Heart left ventricle (tissue), 16 donors: ENCODE measurements at regions of chr19 and their contacts with region 1.

Region 1: GRCh38 chr19:7799640-7800355 is 30.2 kb upstream of the EVI5L start:
- DNase-seq: peak; percentile 53 to 75 (median 64)
- ATAC-seq: peak in 3 of 4 donors; percentile 68 to 89 (median 79)
- H3K4me3 ChIP-seq: peak overlapping the region in 6 of 12 donors; percentile 4 to 33 (median 12)
- H3K27ac ChIP-seq: peak overlapping the region in 1 of 12 donors; percentile 11
- H3K4me1 ChIP-seq: peaks cover 0 to 8% (median 0%) of the 10 kb centered on the region in 12 donors
- H3K27me3 ChIP-seq: peaks cover 0 to 41% (median 16%) of the 10 kb centered on the region in 9 donors
- CTCF ChIP-seq: peak; percentile 29 to 68 (median 58)
- POLR2A ChIP-seq: no peak

Region 2: DNA sequence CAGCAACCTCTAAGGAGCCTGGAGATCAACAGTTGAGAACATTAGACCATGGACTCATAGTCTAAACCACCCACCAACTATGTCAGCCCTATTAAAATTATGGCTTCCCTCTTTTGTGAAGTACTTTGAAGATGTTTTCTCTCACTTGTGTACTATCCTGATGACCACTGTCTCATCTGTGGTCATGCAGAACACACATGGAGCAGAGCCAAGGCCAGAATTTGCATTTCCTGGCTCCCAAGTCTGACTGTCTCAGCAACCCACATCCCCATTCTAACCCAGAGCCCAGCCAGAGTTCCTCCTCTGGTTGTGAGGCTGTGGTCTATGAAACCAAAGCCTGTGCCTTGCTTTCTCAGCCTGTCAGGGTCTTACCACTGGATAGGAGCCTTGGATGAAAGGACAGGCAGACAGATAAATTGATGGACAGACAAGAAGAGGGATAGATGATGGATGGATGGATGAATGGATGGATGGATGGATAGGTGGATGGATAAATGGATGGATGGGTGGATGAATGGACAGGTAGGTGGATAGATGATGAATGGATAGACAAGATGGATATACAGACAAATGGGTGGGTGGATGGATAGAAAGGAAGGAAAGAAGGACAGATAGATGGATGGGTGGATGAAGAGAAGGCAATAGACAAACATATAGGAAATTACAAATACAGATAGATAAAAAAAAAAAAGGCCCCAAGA is 694.9 kb before region 1 on chr19:
- intact Hi-C with region 1: loop called in 5 of 10 experiments (anchors 5 to 10 kb)
- DNase-seq: no peak
- ATAC-seq: peak in 2 of 4 donors; percentile 16 to 24
- H3K4me3 ChIP-seq: no peak overlapping the region
- H3K27ac ChIP-seq: no peak overlapping the region
- H3K4me1 ChIP-seq: peaks cover 0 to 5% (median 0%) of the 10 kb centered on the region in 12 donors
- H3K27me3 ChIP-seq: peaks cover 0 to 4% (median 0%) of the 10 kb centered on the region in 9 donors
- CTCF ChIP-seq: no peak
- POLR2A ChIP-seq: no peak

Region 3: GRCh38 chr19:7349961-7350711 is 449.7 kb before region 1 on chr19:
- intact Hi-C with region 1: loop called in 9 of 10 experiments (anchors 2 to 10 kb)
- DNase-seq: no peak
- ATAC-seq: peak in 1 of 4 donors; percentile 14
- H3K4me3 ChIP-seq: peak overlapping the region in 2 of 12 donors; percentile 26 to 56
- H3K27ac ChIP-seq: peak overlapping the region in 1 of 12 donors; percentile 86
- H3K4me1 ChIP-seq: peaks cover 0 to 28% (median 0%) of the 10 kb centered on the region in 12 donors
- H3K27me3 ChIP-seq: no peaks in the 10 kb centered on the region
- CTCF ChIP-seq: no peak
- POLR2A ChIP-seq: no peak

Region 4: DNA sequence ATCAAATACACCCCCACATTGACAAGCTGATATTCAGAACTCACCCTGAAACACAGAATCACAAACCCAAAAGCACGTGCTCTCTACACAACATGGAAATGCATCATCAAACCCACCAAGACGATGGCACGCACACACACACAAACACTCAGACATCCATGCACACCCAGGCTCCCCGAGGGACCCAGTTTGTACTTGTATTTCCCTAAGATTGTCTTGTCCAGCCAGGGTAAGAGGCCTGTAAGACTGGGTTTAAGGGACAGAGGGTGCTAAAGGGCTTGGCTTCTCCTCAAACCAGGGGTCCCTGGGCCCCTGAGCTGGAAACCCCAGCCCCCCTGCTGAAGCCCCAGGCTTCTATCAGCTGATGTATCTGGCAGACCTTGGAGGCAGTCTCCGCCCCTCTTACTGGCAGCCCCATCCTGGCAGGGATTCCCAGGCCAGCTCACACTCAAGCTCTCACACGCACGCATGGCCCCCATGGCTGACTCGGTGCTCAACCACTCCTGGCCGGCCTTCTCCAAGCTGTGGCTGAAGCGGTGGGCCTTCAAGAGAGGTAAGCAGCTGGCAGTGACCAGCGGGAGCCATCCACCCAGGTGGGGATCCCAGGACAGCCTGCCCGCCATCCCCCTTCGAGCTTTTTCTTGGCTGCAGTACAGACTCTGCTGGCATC is 444.5 kb before region 1 on chr19:
- intact Hi-C with region 1: loop called in 9 of 10 experiments (anchors 2 to 10 kb)
- DNase-seq: no peak
- ATAC-seq: no peak
- H3K4me3 ChIP-seq: no peak overlapping the region
- H3K27ac ChIP-seq: peak overlapping the region in 1 of 12 donors; percentile 80
- H3K4me1 ChIP-seq: peaks cover 0 to 5% (median 0%) of the 10 kb centered on the region in 12 donors
- H3K27me3 ChIP-seq: peaks cover 0 to 6% (median 0%) of the 10 kb centered on the region in 9 donors
- CTCF ChIP-seq: no peak
- POLR2A ChIP-seq: no peak

Region 5: GRCh38 chr19:7562646-7563393 is 237.0 kb before region 1 on chr19:
- intact Hi-C with region 1: loop called in 9 of 10 experiments (anchors 1 to 10 kb)
- DNase-seq: no peak
- ATAC-seq: no peak
- H3K4me3 ChIP-seq: no peak overlapping the region
- H3K27ac ChIP-seq: no peak overlapping the region
- H3K4me1 ChIP-seq: no peaks in the 10 kb centered on the region
- H3K27me3 ChIP-seq: no peaks in the 10 kb centered on the region
- CTCF ChIP-seq: no peak
- POLR2A ChIP-seq: no peak

Region 6: GRCh38 chr19:7652061-7652641 is 147.6 kb before region 1 on chr19:
- intact Hi-C with region 1: loop called in 8 of 10 experiments (anchors 2 to 10 kb)
- DNase-seq: peak; percentile 74 to 92 (median 80)
- ATAC-seq: peak; percentile 58 to 88 (median 82)
- H3K4me3 ChIP-seq: peak overlapping the region in 9 of 12 donors; percentile 16 to 42 (median 25)
- H3K27ac ChIP-seq: peak overlapping the region in 2 of 12 donors; percentile 23 to 51
- H3K4me1 ChIP-seq: peaks cover 0 to 18% (median 0%) of the 10 kb centered on the region in 12 donors
- H3K27me3 ChIP-seq: peaks cover 0 to 6% (median 0%) of the 10 kb centered on the region in 9 donors
- CTCF ChIP-seq: peak; percentile 96 to 99 (median 98)
- POLR2A ChIP-seq: no peak

Region 7: GRCh38 chr19:8116437-8117293 is 316.9 kb after region 1 on chr19:
- intact Hi-C with region 1: no loop called
- DNase-seq: no peak
- ATAC-seq: no peak
- H3K4me3 ChIP-seq: no peak overlapping the region
- H3K27ac ChIP-seq: no peak overlapping the region
- H3K4me1 ChIP-seq: no peaks in the 10 kb centered on the region
- H3K27me3 ChIP-seq: no peaks in the 10 kb centered on the region
- CTCF ChIP-seq: no peak
- POLR2A ChIP-seq: no peak